Activated T-helper 1 cell treated with anti-CD3 and anti-CD28 coated beads, Interleukin-12 subunit alpha, Interleukin-12 subunit beta, Interleukin-2, Interleukin-4 antibody, amounts not matched to agents 30 ng/mL and 10 ng/mL and 1 ng/mL, durations not matched to agents 14 hours and 24 hours and 36 hours (primary cell): ENCODE measurements at regions of chr14 and their contacts with region 1.

Region 1: GRCh38 chr14:22505697-22506377 is 83.2 kb downstream of the DAD1 start:
- DNase-seq: no peak
- H3K4me3 Mint-ChIP-seq: peak overlapping the region; percentile 95
- H3K27ac Mint-ChIP-seq: peak overlapping the region; percentile 96
- H3K4me1 Mint-ChIP-seq: peaks cover 78% of the 10 kb centered on the region
- H3K27me3 Mint-ChIP-seq: no peaks in the 10 kb centered on the region

Region 2: GRCh38 chr14:21868442-21869046 is 637.3 kb before region 1 on chr14:
- intact Hi-C with region 1: loop called (anchors 5 kb)
- DNase-seq: peak; percentile 72
- H3K4me3 Mint-ChIP-seq: peak overlapping the region; percentile 74
- H3K27ac Mint-ChIP-seq: peak overlapping the region; percentile 46
- H3K4me1 Mint-ChIP-seq: peaks cover 23% of the 10 kb centered on the region
- H3K27me3 Mint-ChIP-seq: peaks cover 5% of the 10 kb centered on the region

Region 3: GRCh38 chr14:22122227-22122818 is 383.5 kb before region 1 on chr14:
- intact Hi-C with region 1: loop called (anchors 5 kb)
- DNase-seq: no peak
- H3K4me3 Mint-ChIP-seq: peak overlapping the region; percentile 90
- H3K27ac Mint-ChIP-seq: peak overlapping the region; percentile 79
- H3K4me1 Mint-ChIP-seq: peaks cover 21% of the 10 kb centered on the region
- H3K27me3 Mint-ChIP-seq: no peaks in the 10 kb centered on the region

Region 4: DNA sequence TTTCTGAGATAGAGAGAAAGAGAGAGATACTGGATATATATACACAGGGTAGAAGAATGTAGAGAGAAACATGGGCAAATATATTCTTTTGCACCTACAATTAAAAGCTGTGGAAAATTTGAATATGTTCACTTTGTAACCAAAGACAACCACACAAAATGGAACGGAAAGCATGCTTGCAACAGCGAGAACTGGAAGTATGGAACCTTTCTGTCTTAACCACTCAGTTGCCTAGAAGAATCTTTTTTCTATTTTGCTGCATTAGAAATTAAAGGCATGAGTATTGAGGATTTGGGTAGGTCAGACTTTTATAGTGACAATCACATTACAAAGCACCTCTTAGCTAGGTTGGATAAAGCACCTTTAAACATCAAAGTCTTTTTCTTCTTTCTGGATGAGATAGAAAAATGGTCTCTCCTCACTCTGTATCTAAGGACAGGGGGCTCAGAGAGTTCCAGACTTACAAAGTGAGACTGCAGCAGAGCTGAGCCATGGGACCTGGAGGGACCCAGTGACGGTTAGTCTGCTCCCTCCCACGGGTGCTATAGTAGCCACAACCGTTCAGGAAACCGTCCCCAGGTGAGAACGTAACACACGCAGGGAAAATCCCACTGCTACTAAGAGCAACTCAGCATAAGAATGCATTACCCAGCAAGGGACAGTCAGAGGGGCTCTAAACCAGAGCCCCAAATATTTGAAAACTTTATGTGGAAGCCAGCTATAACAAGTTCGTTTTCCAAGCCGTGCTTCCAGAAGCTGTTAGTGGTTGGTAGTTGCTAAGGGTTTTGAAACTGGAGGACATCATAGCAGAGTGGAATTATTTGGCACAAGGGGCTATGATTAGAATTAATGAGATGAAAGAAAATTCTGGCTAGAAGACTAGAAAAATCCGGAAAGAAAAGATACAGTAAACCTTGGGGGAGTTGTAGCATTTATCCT is 13.9 kb before region 1 on chr14:
- intact Hi-C with region 1: loop called (anchors 1 kb)
- DNase-seq: no peak
- H3K4me3 Mint-ChIP-seq: peak overlapping the region; percentile 91
- H3K27ac Mint-ChIP-seq: peak overlapping the region; percentile 99
- H3K4me1 Mint-ChIP-seq: peaks cover 33% of the 10 kb centered on the region
- H3K27me3 Mint-ChIP-seq: no peaks in the 10 kb centered on the region

Region 5: DNA sequence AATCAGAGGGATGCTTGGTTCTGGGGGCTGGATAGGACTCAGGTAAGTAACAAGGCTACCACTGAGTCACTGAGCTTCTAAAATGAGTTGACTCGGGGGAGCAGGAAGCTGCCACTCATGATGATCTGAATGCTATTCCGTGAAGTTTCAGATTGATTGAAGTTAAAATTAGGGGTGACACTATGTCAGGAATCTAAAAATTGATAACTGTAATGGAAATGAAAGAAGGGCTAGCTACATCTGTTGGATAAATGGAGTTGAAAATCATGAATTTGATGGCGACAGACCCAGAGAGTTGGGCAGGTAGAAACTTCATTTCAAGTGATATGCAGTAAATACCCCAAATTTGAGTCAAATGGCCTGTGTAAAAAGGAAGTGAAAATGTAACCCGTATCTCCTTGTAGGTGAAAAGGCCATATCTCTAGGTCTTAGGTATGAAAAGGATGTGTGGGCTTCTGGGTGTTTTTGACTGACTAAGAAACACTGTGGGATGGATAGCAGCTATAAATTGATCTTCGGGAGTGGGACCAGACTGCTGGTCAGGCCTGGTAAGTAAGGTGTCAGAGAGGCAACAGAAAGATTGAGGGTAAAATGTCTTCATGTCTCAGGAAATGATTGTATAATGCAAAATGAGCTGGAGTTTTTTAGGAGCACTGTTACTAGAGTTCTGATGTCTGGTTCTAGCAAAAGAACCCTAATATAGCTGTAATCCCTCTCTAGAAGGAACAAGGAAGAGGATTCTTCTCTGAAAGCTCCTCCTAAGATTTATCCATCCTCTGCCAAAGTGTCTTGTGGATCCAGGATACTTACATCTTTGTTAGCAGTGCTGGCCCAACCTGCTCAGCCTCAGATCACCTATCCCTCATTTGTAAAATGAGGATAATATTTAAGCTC is 25.9 kb after region 1 on chr14:
- intact Hi-C with region 1: loop called (anchors 1 kb)
- DNase-seq: no peak
- H3K4me3 Mint-ChIP-seq: peak overlapping the region; percentile 80
- H3K27ac Mint-ChIP-seq: peak overlapping the region; percentile 95
- H3K4me1 Mint-ChIP-seq: peaks cover 90% of the 10 kb centered on the region
- H3K27me3 Mint-ChIP-seq: no peaks in the 10 kb centered on the region

Region 6: DNA sequence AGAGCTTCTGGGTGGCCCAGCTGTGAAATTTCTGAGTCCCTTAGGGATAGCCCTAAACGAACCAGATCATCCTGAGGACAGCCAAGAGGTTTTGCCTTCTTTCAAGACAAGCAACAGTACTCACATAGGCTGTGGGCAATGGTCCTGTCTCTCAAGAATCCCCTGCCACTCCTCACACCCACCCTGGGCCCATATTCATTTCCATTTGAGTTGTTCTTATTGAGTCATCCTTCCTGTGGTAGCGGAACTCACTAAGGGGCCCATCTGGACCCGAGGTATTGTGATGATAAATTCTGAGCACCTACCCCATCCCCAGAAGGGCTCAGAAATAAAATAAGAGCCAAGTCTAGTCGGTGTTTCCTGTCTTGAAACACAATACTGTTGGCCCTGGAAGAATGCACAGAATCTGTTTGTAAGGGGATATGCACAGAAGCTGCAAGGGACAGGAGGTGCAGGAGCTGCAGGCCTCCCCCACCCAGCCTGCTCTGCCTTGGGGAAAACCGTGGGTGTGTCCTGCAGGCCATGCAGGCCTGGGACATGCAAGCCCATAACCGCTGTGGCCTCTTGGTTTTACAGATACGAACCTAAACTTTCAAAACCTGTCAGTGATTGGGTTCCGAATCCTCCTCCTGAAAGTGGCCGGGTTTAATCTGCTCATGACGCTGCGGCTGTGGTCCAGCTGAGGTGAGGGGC is 44.3 kb after region 1 on chr14:
- intact Hi-C with region 1: loop called (anchors 1 kb)
- DNase-seq: peak; percentile 73
- H3K4me3 Mint-ChIP-seq: peak overlapping the region; percentile 79
- H3K27ac Mint-ChIP-seq: peak overlapping the region; percentile 99
- H3K4me1 Mint-ChIP-seq: peaks cover 96% of the 10 kb centered on the region
- H3K27me3 Mint-ChIP-seq: no peaks in the 10 kb centered on the region